Activated naive CD4-positive, alpha-beta T cell treated with anti-CD3 and anti-CD28 coated beads for 36 hours (primary cell): ENCODE measurements at regions of chr9 and their contacts with region 1.

Region 1: GRCh38 chr9:306887-307286 is 92.2 kb downstream of the DOCK8 start:
- DNase-seq: peak; percentile 73
- H3K4me3 Mint-ChIP-seq: no peak overlapping the region
- H3K27ac Mint-ChIP-seq: no peak overlapping the region
- H3K4me1 Mint-ChIP-seq: no peaks in the 10 kb centered on the region
- H3K27me3 Mint-ChIP-seq: no peaks in the 10 kb centered on the region

Region 2: GRCh38 chr9:214648-215493 is 92.0 kb before region 1 on chr9 and contains the start of gene DOCK8:
- CTCF ChIA-PET with region 1: interaction called, 8 read pairs
- intact Hi-C with region 1: loop called (anchors 1 kb)
- DNase-seq: peak; percentile 66
- H3K4me3 Mint-ChIP-seq: peak within 1 kb of the TSS; percentile 76
- H3K27ac Mint-ChIP-seq: no peak within 1 kb of the TSS
- H3K4me1 Mint-ChIP-seq: peaks cover 3% of the 10 kb centered on the region
- H3K27me3 Mint-ChIP-seq: peaks cover 9% of the 10 kb centered on the region
- total RNA-seq, gene DOCK8: 110 to 114 TPM

Region 3: GRCh38 chr9:546797-547223 is 239.9 kb after region 1 on chr9:
- CTCF ChIA-PET with region 1: no interaction called
- intact Hi-C with region 1: no loop called
- DNase-seq: no peak
- H3K4me3 Mint-ChIP-seq: peak overlapping the region; percentile 13
- H3K27ac Mint-ChIP-seq: peak overlapping the region; percentile 17
- H3K4me1 Mint-ChIP-seq: peaks cover 28% of the 10 kb centered on the region
- H3K27me3 Mint-ChIP-seq: no peaks in the 10 kb centered on the region